ENCODE measurements at regions of chr3 and their contacts with region 1.

Region 1: GRCh38 chr3:170802164-170803151 is 67.5 kb downstream of the RPL22L1 start:
- DNase-seq: peak; percentile 65
- H3K4me3 ChIP-seq: no peak overlapping the region
- H3K27ac ChIP-seq: no peak overlapping the region
- H3K4me1 ChIP-seq: peaks cover 20% of the 10 kb centered on the region
- H3K27me3 ChIP-seq: no peaks in the 10 kb centered on the region
- CTCF ChIP-seq: no peak

Region 2: GRCh38 chr3:170233530-170233929 is 568.9 kb before region 1 on chr3:
- CTCF ChIA-PET with region 1: no interaction called
- dilution Hi-C with region 1: no loop called
- in situ Hi-C with region 1: no loop called
- intact Hi-C with region 1: no loop called
- DNase-seq: peak; percentile 68
- H3K4me3 ChIP-seq: no peak overlapping the region
- H3K27ac ChIP-seq: no peak overlapping the region
- H3K4me1 ChIP-seq: peaks cover 9% of the 10 kb centered on the region
- H3K27me3 ChIP-seq: no peaks in the 10 kb centered on the region
- CTCF ChIP-seq: no peak

Region 3: GRCh38 chr3:170699158-170700053 is 103.1 kb before region 1 on chr3:
- CTCF ChIA-PET with region 1: no interaction called
- dilution Hi-C with region 1: loop called (anchors 5 kb)
- in situ Hi-C with region 1: no loop called
- intact Hi-C with region 1: no loop called
- DNase-seq: no peak
- H3K4me3 ChIP-seq: no peak overlapping the region
- H3K27ac ChIP-seq: no peak overlapping the region
- H3K4me1 ChIP-seq: peaks cover 13% of the 10 kb centered on the region
- H3K27me3 ChIP-seq: no peaks in the 10 kb centered on the region
- CTCF ChIP-seq: no peak

Measured in mammary epithelial cell (primary cell).